ENCODE measurements at regions of chr2 and their contacts with region 1.

Region 1: GRCh38 chr2:237128026-237128703 is 42.5 kb downstream of the COPS8 start:
- DNase-seq: peak; percentile 89

Region 2: GRCh38 chr2:236972491-236973342 is 155.4 kb before region 1 on chr2:
- intact Hi-C with region 1: no loop called
- DNase-seq: no peak

Region 3: GRCh38 chr2:237512774-237513466 is 384.8 kb after region 1 on chr2:
- intact Hi-C with region 1: loop called (anchors 5 kb)
- DNase-seq: peak; percentile 92

Measured in cardiac septum (tissue), 1 donor.